AG04449 (cell line): ENCODE measurements at regions of chr2 and their contacts with region 1.

Region 1: GRCh38 chr2:238462782-238463396 is 36.2 kb downstream of the ASB1 start:
- DNase-seq: no peak
- H3K4me3 ChIP-seq: no peak overlapping the region
- CTCF ChIP-seq: peak; percentile 33

Region 2: GRCh38 chr2:238362626-238363025 is 100.3 kb before region 1 on chr2:
- CTCF ChIA-PET with region 1: interaction called, 142 read pairs
- POLR2A ChIA-PET with region 1: no interaction called
- DNase-seq: no peak
- H3K4me3 ChIP-seq: no peak overlapping the region
- CTCF ChIP-seq: no peak

Region 3: DNA sequence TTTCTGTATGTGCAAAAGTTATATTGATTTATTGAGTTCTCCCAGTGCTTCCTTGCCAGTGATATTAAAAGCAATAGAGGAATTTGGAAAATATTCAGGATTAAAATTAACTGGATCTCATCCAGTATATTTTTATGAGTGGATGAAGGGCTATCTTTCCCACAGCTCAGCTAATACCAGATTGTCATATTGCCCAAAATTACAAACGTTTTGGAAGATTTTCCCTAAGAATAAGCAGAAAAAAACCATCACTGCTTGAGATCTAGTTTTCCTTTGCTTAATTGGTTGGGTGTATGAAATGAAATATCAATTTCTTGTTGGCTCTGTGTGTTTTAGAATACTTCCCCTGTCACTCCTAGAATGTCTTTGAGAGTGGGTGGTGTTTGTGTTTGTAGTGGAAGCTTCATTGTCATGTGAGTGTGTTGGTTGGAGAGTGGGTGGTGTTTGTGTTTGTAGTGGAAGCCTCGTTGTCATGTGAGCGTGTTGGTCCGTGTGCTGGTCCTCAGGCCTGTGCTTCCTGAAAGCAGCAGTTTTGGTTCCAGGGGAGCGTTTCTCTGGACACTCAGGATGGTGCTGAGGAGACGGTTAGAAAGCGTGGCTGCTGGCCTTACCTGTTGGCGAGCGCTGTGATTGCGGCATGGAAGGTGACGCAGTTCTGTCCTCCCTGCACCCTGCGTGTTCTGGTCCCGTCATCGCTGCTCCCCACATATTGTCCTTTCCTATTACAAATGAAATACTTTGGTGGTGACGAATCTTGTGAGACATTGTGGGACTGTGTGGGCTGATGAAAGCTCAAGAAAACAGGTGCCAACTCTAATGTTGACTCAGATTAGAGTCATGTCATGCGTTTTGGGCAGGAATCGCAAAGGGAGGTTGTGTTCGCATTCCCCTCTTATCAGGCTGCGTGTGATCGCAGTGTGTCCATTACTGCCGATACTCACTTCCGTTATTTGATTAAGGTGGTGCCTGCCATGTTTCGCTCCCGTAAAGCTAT is 23.7 kb before region 1 on chr2:
- CTCF ChIA-PET with region 1: interaction called, 10 read pairs
- POLR2A ChIA-PET with region 1: no interaction called
- DNase-seq: no peak
- H3K4me3 ChIP-seq: no peak overlapping the region
- CTCF ChIP-seq: no peak

Region 4: DNA sequence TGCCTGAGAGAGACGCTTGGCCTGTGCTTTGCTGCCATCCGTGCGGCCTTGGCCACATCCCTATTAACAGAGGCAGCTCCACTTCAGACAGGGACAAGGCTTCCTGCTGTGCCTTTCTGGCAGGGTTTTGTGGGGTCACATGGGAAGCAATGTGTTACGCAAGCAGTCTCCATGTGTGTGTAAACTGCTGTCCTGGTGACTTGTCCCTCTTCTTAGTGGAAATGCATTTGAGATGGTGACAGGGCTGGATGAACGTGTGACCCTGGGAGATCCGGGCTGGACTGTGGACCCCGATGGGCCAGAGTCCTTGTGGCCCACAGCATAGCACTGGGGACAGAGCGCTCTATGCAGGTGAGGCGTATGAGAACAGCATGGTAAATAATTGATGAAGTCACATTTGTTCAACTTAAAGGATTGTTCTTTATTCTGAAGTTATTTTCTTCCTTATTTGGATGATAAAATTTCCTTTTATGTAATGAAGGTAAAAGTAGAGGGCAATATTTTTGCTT is 12.9 kb before region 1 on chr2:
- CTCF ChIA-PET with region 1: interaction called, 17 read pairs
- POLR2A ChIA-PET with region 1: no interaction called
- DNase-seq: no peak
- H3K4me3 ChIP-seq: no peak overlapping the region
- CTCF ChIP-seq: no peak

Region 5: DNA sequence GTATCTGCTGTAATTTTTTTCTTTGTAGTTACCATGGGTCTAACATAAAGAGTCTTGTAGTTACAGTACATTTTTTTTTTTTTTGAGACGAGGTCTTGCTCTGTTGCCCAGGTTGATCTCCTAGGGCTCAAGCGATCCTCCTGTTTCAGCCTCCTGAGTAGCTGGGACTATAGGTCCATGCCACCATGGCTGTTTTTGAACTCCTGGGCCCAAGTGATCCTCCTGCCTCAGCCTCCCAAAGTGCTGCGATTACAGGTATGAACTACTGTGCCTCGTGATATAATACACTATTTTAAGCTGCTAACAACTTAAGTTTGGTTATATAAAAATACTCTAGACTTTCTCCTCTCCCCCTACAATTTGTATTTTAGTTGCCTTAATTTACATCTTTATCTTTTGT is 10.1 kb after region 1 on chr2:
- CTCF ChIA-PET with region 1: interaction called, 17 read pairs
- POLR2A ChIA-PET with region 1: no interaction called
- DNase-seq: no peak
- H3K4me3 ChIP-seq: no peak overlapping the region
- CTCF ChIP-seq: no peak

Region 6: GRCh38 chr2:238636269-238637073 is 173.6 kb after region 1 on chr2:
- CTCF ChIA-PET with region 1: no interaction called
- POLR2A ChIA-PET with region 1: no interaction called
- DNase-seq: peak; percentile 37
- H3K4me3 ChIP-seq: no peak overlapping the region
- CTCF ChIP-seq: no peak